ENCODE measurements at regions of chr2 and their contacts with region 1.

Region 1: DNA sequence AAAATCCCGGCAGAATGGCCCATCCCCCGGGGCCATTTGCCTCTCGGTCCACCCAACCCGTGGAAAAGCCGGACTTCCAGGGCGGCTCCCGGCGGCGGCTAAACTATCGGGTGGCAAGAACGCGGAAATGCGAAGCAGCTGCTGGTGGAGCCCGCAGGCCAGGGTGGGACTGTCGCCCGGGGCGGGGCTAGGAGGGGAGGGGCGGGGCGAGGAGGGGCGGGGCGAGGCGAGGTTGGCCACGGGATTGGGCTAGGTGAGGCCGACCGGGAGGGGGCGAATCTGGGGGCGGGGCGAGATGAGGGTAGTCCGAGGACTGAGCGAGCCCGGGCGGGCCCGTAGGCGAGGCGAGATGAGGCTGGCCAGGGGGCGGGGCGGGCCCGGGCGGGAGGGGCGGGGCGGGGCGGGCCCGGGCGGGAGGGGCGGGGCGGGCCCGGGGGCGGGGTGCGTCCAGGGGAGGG is 315 bp upstream of the SLC66A3 start:
- DNase-seq: peak; percentile 97 to 99 (median 99)
- ATAC-seq: peak; percentile 89
- H3K4me3 ChIP-seq: peak overlapping the region; percentile 60
- H3K4me3 Mint-ChIP-seq: peak overlapping the region; percentile 92
- H3K27ac ChIP-seq: peak overlapping the region; percentile 74 to 78
- H3K27ac Mint-ChIP-seq: peak overlapping the region; percentile 90
- H3K4me1 ChIP-seq: peaks cover 34% of the 10 kb centered on the region
- H3K4me1 Mint-ChIP-seq: peaks cover 24% of the 10 kb centered on the region
- H3K27me3 ChIP-seq: no peaks in the 10 kb centered on the region
- H3K27me3 Mint-ChIP-seq: no peaks in the 10 kb centered on the region
- CTCF ChIP-seq: no peak

Region 2: DNA sequence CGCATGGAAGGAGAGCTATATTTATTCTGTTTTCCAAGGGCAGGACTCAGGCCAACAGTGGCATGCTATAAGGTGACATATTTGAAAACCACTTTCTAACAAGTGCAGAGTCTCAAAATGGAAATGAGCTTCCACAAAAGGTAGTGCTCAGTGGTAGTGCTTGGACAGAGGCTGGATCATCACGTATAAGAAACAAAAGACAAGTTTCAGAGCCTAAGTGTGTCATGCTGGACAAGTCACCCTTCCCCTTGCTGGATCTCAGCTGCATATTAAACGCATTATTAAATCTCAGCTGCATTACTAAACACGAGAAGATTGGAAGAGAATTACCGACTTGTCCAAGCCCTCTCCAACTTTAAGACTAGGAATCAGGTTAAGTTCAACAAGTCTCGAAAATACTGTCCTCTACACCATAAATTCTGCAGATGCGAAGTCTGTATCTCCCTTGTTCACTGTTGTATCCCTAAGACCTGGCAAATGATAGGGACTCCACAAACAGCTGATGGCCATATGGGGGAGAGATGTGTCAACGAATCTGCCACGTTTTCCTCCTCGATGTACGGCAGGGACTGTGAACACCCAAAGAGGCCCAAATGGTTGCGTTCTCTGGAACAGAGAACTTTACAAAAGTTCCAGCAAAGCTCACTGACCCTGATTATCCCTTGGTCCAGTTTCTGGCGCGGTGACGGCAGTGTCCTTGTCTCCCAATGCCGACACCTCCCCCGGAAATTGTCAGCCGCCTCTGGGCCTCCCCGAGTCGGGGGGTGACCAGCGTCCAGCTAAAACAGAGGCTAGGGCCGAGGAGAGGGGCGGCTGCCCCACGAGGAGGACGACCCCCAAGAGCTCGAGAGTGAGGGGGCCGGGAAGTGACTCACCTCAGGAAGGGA is 465.8 kb before region 1 on chr2:
- CTCF ChIA-PET with region 1: no interaction called
- POLR2A ChIA-PET with region 1: interaction called, 3 read pairs
- intact Hi-C with region 1: loop called in 1 of 2 experiments (anchors 10 kb)
- DNase-seq: peak in 3 of 14 experiments; percentile 3 to 9 (median 7)
- ATAC-seq: peak; percentile 16
- H3K4me3 ChIP-seq: peak overlapping the region; percentile 91
- H3K4me3 Mint-ChIP-seq: no peak overlapping the region
- H3K27ac ChIP-seq: peak overlapping the region; percentile 88 to 89
- H3K27ac Mint-ChIP-seq: no peak overlapping the region
- H3K4me1 ChIP-seq: peaks cover 30% of the 10 kb centered on the region
- H3K4me1 Mint-ChIP-seq: peaks cover 12% of the 10 kb centered on the region
- H3K27me3 ChIP-seq: no peaks in the 10 kb centered on the region
- H3K27me3 Mint-ChIP-seq: no peaks in the 10 kb centered on the region
- CTCF ChIP-seq: no peak

Region 3: DNA sequence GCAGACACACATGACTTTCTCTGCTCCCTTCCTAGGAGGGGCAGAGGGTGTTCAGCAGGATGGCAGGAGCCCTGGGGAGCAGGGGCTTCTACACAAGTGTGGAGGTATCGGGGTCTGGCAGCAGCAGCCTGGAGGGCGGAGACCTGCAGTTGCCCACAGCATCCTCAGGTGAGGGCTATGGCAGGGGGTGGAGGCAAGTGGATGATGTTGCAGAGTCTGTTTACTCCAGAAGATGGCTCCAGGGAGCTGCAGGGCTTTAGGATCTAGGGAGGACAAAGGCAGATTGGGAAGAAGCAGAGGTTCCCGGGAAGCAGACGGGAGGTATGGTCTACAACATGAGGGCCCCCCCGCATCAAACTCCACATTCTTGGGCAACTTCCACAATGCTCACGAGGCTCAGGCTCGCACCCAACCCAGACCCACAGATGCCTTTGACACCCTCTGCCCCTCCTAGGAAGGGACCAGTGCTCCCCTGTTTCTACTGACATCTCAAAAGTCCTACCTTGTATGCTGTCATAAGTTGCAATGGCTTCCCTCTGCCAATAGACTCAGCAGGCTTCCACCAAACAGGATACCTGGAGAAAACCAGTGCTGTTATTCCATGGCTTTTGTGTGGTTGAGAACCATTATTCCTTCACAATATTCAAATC is 445.5 kb before region 1 on chr2:
- CTCF ChIA-PET with region 1: no interaction called
- POLR2A ChIA-PET with region 1: no interaction called
- intact Hi-C with region 1: no loop called
- DNase-seq: no peak
- ATAC-seq: no peak
- H3K4me3 ChIP-seq: no peak overlapping the region
- H3K4me3 Mint-ChIP-seq: no peak overlapping the region
- H3K27ac ChIP-seq: no peak overlapping the region
- H3K27ac Mint-ChIP-seq: no peak overlapping the region
- H3K4me1 ChIP-seq: peaks cover 7% of the 10 kb centered on the region
- H3K4me1 Mint-ChIP-seq: peaks cover 7% of the 10 kb centered on the region
- H3K27me3 ChIP-seq: peaks cover 6 to 14% of the 10 kb centered on the region in 2 experiments
- H3K27me3 Mint-ChIP-seq: peaks cover 35% of the 10 kb centered on the region
- CTCF ChIP-seq: no peak

Region 4: DNA sequence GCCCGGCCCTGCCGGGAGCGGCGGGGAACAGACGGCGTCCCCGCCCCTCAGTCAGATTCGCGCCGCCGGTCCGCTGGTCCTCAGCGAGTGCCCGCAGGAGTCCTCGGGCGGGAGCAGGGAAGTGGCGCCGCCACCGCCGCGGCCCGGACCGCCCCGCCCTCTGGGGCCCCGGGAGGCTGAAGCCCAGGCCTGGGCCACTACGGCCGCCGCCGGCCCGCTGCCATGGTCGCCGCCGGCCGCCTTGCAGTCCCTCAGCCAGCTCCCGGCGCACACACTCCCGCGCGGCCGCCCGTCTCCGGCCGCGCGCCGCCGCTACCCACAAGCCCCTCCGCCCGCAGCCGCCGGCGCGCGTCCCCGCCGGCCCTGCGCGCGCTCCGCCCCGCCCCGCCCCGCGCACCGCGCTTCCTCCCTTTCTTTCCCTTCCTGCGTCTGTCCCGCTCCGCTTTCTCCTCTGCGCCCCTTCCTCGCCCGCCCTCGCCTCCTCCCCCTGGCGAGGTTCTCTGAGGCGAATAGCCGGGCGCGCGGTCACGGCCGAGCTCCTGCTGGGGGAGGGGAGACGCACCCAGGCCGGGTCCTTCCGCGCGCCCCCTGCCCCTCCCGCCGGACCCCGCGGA is 189.5 kb after region 1 on chr2 and contains the start of gene ROCK2:
- CTCF ChIA-PET with region 1: no interaction called
- POLR2A ChIA-PET with region 1: interaction called, 17 read pairs
- intact Hi-C with region 1: loop called (anchors 5 to 10 kb)
- DNase-seq: peak; percentile 42 to 83 (median 59)
- ATAC-seq: peak; percentile 68
- H3K4me3 ChIP-seq: peak within 1 kb of the TSS; percentile 88
- H3K4me3 Mint-ChIP-seq: peak within 1 kb of the TSS; percentile 98
- H3K27ac ChIP-seq: peak within 1 kb of the TSS; percentile 7 to 42
- H3K27ac Mint-ChIP-seq: peak within 1 kb of the TSS; percentile 88
- H3K4me1 ChIP-seq: peaks cover 16% of the 10 kb centered on the region
- H3K4me1 Mint-ChIP-seq: peaks cover 44% of the 10 kb centered on the region
- H3K27me3 ChIP-seq: no peaks in the 10 kb centered on the region
- H3K27me3 Mint-ChIP-seq: no peaks in the 10 kb centered on the region
- CTCF ChIP-seq: no peak
- total RNA-seq, gene ROCK2: 6.9 to 9.4 TPM

Region 5: DNA sequence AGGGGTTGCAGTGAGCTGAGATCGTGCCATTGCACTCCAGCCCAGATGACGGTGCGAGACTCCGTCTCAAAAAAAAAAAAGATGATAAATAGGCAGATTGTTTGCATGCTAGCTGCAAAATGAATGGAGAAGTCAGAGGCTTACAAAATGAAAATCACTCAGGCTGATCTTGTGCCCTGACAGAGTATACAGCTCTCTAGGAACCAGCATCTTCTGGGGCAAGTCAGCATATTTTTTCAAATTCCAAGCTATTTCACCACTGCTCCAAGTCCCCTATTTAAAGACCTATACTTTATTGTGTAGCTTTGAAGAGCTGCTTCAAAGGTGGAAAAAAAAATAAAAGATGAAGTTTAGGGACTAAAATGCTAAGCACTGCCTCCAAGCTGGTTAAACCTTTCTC is 304.9 kb after region 1 on chr2:
- CTCF ChIA-PET with region 1: no interaction called
- POLR2A ChIA-PET with region 1: interaction called, 9 read pairs
- intact Hi-C with region 1: loop called in 1 of 2 experiments (anchors 5 kb)
- DNase-seq: no peak
- ATAC-seq: no peak
- H3K4me3 ChIP-seq: no peak overlapping the region
- H3K4me3 Mint-ChIP-seq: no peak overlapping the region
- H3K27ac ChIP-seq: no peak overlapping the region
- H3K27ac Mint-ChIP-seq: no peak overlapping the region
- H3K4me1 ChIP-seq: peaks cover 5% of the 10 kb centered on the region
- H3K4me1 Mint-ChIP-seq: peaks cover 79% of the 10 kb centered on the region
- H3K27me3 ChIP-seq: no peaks in the 10 kb centered on the region
- H3K27me3 Mint-ChIP-seq: no peaks in the 10 kb centered on the region
- CTCF ChIP-seq: no peak